ENCODE measurements at regions of chr12 and their contacts with region 1.

Region 1: GRCh38 chr12:10771132-10771733 is 31.2 kb downstream of the TAS2R7 start:
- DNase-seq: no peak
- H3K4me3 Mint-ChIP-seq: no peak overlapping the region
- H3K27ac Mint-ChIP-seq: no peak overlapping the region
- H3K4me1 Mint-ChIP-seq: no peaks in the 10 kb centered on the region
- H3K27me3 Mint-ChIP-seq: peaks cover 44% of the 10 kb centered on the region

Region 2: DNA sequence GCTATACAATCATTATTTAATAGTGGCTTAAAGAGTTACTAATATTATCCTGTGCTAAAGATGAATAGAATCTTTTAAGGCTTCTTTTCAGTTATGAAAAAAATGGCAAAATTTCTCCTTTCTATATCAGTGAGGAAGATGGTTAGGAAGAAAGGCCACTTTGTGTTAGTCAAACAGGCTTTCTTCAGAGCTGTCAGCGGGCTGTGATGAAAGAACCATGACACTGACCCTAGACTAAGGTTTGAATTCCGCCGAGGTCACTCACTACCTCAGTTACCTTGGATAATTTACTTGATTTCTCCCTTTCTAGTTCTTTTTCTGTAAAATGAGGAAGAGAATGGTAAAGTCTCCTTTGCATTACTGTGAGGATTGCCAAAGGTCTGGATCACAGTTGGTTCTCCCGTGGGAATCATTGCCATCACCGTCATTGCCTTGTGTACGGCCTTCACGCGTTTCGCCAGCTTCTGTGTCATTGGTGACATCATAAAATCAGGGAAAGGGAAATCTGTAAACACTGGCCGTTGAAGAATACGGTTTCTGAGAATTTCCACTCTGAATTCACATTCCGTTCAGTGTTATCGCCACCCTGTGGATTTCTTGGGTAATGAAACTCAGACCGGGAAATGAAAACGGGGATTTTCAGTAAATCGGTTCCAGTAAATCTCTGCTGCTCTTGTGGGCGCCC is 21.4 kb before region 1 on chr12:
- intact Hi-C with region 1: no loop called
- DNase-seq: peak; percentile 60
- H3K4me3 Mint-ChIP-seq: peak overlapping the region; percentile 38
- H3K27ac Mint-ChIP-seq: no peak overlapping the region
- H3K4me1 Mint-ChIP-seq: peaks cover 10% of the 10 kb centered on the region
- H3K27me3 Mint-ChIP-seq: peaks cover 43% of the 10 kb centered on the region

Region 3: GRCh38 chr12:10838461-10838860 is 67.2 kb after region 1 on chr12:
- intact Hi-C with region 1: no loop called
- DNase-seq: no peak
- H3K4me3 Mint-ChIP-seq: no peak overlapping the region
- H3K27ac Mint-ChIP-seq: no peak overlapping the region
- H3K4me1 Mint-ChIP-seq: no peaks in the 10 kb centered on the region
- H3K27me3 Mint-ChIP-seq: no peaks in the 10 kb centered on the region

Region 4: GRCh38 chr12:11202811-11203210 is 431.6 kb after region 1 on chr12:
- intact Hi-C with region 1: loop called (anchors 5 kb)
- DNase-seq: no peak
- H3K4me3 Mint-ChIP-seq: no peak overlapping the region
- H3K27ac Mint-ChIP-seq: no peak overlapping the region
- H3K4me1 Mint-ChIP-seq: no peaks in the 10 kb centered on the region
- H3K27me3 Mint-ChIP-seq: peaks cover 2% of the 10 kb centered on the region

Measured in activated T-helper 2 cell treated with anti-CD3 and anti-CD28 coated beads, Interferon-gamma antibody, Interleukin-2, Interleukin-4, amounts not matched to agents 10 μg/mL and 5 μg/mL and 100 μg/mL, durations not matched to agents 14 hours and 24 hours and 36 hours (primary cell).